Activated naive CD4-positive, alpha-beta T cell treated with anti-CD3 and anti-CD28 coated beads, Interleukin-2, amount 10 ng/mL, durations not matched to agents 7 days and 5 days (primary cell): ENCODE measurements at regions of chr7 and their contacts with region 1.

Region 1: DNA sequence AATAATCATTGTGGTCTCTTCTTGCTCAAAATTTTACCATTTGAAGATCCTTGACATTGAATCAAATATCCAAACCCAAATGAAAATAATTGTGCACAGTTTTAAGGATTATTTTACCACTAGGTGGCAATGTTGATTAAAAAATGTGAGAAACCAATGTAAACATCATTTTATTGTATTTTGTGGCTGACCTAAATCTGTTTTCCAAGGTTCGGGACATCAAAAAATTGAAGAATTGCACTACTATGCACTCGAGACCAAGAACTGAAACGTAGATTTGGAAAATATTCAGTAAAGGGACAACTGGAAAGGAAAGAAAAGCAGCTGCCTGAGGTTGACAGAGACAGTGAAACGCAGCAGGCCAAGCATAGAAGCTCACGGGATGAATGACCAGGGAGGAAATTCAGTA is 259.3 kb downstream of the SNX13 start:
- DNase-seq: no peak
- H3K4me3 Mint-ChIP-seq: no peak overlapping the region
- H3K27ac Mint-ChIP-seq: no peak overlapping the region
- H3K4me1 Mint-ChIP-seq: no peaks in the 10 kb centered on the region
- H3K27me3 Mint-ChIP-seq: peaks cover 4% of the 10 kb centered on the region

Region 2: DNA sequence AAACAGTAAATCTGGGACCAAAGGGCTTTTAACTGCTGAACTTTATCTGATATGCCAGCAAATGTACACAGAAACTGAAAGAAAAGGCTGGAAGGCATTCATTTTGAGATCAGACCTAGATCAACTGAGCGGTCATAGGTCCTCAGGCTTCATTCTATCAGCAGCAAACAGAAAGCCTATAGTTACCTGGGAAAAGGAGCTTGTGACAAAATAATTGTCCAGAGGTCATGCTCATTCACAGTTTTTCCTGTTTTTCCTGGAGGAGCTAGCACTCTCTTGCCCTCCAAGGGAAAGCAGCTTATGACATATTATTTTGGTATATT is 62.3 kb before region 1 on chr7:
- CTCF ChIA-PET with region 1: no interaction called
- DNase-seq: no peak
- H3K4me3 Mint-ChIP-seq: no peak overlapping the region
- H3K27ac Mint-ChIP-seq: no peak overlapping the region
- H3K4me1 Mint-ChIP-seq: no peaks in the 10 kb centered on the region
- H3K27me3 Mint-ChIP-seq: no peaks in the 10 kb centered on the region

Region 3: GRCh38 chr7:18345641-18346234 is 664.8 kb after region 1 on chr7:
- CTCF ChIA-PET with region 1: interaction called, 16 read pairs
- DNase-seq: peak; percentile 28
- H3K4me3 Mint-ChIP-seq: no peak overlapping the region
- H3K27ac Mint-ChIP-seq: no peak overlapping the region
- H3K4me1 Mint-ChIP-seq: no peaks in the 10 kb centered on the region
- H3K27me3 Mint-ChIP-seq: no peaks in the 10 kb centered on the region